Prostate gland (tissue), 2 donors: ENCODE measurements at regions of chr1 and their contacts with region 1.

Region 1: DNA sequence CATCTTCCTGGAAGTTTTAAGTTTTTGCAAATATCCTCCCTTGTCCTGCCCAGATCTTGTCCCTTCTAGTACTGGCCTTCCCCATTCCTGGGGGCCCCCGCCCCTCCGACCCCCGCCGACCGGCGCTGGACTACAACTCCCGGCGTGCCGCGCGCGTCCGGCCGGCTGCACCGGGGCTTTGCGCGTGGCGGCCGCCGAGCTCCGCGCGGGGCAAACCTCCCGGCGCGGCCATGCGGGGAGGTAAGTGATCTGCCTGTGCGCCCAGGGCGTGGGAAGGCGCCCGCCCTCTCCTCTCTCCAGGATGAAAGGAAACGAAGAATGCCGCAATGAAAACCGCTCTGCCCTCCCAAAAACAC is 3.2 kb upstream of the SAMD13 start:
- DNase-seq: peak; percentile 18
- H3K4me3 ChIP-seq: peak overlapping the region; percentile 72 to 78
- H3K27ac ChIP-seq: peak overlapping the region; percentile 76 to 87
- H3K4me1 ChIP-seq: peaks cover 14% of the 10 kb centered on the region
- H3K27me3 ChIP-seq: no peaks in the 10 kb centered on the region
- CTCF ChIP-seq: no peak
- POLR2A ChIP-seq: peak; percentile 56

Region 2: DNA sequence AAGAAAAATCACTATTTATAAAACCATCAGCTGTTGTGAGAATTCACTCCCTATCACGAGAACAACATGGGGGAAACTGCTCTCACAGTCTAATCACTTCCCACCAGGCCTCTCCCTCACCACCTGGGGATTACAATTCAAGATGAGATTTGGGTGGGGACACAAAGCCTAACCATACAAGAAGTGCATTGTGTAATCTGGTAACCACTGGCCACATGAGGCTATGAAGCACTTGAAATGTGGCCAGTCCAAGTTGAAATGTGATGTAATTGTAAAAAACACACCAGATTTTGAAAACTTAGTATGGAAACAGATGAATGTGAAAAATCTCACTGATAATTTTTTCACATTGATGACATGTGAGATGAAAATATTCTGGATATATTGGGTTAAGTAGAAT is 593.2 kb before region 1 on chr1:
- intact Hi-C with region 1: no loop called
- DNase-seq: no peak
- H3K4me3 ChIP-seq: no peak overlapping the region
- H3K27ac ChIP-seq: no peak overlapping the region
- H3K4me1 ChIP-seq: no peaks in the 10 kb centered on the region
- H3K27me3 ChIP-seq: no peaks in the 10 kb centered on the region
- CTCF ChIP-seq: no peak
- POLR2A ChIP-seq: no peak

Region 3: GRCh38 chr1:84365225-84366221 is 67.2 kb after region 1 on chr1:
- intact Hi-C with region 1: loop called (anchors 10 kb)
- DNase-seq: no peak
- H3K4me3 ChIP-seq: no peak overlapping the region
- H3K27ac ChIP-seq: no peak overlapping the region
- H3K4me1 ChIP-seq: no peaks in the 10 kb centered on the region
- H3K27me3 ChIP-seq: no peaks in the 10 kb centered on the region
- CTCF ChIP-seq: no peak
- POLR2A ChIP-seq: no peak

Region 4: GRCh38 chr1:84433258-84434080 is 135.2 kb after region 1 on chr1:
- intact Hi-C with region 1: loop called (anchors 10 kb)
- DNase-seq: peak; percentile 63
- H3K4me3 ChIP-seq: peak overlapping the region; percentile 2 to 3
- H3K27ac ChIP-seq: peak overlapping the region; percentile 15 to 53
- H3K4me1 ChIP-seq: no peaks in the 10 kb centered on the region
- H3K27me3 ChIP-seq: no peaks in the 10 kb centered on the region
- CTCF ChIP-seq: peak; percentile 45 to 89 (median 75)
- POLR2A ChIP-seq: no peak

Region 5: GRCh38 chr1:84810343-84810742 is 512.0 kb after region 1 on chr1:
- intact Hi-C with region 1: no loop called
- DNase-seq: no peak
- H3K4me3 ChIP-seq: no peak overlapping the region
- H3K27ac ChIP-seq: no peak overlapping the region
- H3K4me1 ChIP-seq: no peaks in the 10 kb centered on the region
- H3K27me3 ChIP-seq: no peaks in the 10 kb centered on the region
- CTCF ChIP-seq: no peak
- POLR2A ChIP-seq: no peak